ENCODE measurements at regions of chr1 and their contacts with region 1.

Region 1: DNA sequence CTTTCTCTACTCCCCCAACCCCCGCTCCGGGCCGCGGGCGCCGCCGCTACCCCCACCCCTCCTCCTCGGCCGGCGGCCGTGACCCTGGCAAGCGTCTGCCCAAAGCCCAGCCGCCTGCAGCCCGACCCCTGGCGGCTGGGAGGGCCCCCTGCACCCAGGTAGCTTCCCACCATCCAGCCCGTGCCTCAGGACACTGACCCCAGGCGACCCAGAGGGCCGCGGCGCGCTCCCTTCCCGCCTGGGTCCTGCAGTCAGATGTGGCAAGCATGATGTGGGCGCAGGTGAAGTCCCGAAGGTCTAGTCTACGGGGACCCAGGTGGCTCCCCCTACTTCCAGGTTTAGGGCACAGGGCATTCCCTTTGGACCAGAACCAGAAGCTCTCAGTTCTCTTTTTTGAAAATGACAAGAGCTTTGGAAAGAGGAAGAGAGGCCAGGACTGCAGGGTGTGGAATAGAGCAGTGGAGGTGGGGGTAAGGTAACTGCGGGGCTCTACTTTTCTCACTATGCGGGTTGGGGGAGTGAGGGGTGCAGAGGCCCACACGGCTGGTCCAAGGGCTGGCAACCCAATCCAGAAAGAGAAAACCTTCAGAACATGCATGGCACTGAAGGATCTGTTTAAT is at the start of gene DENND4B:
- DNase-seq: peak; percentile 83
- ATAC-seq: peak; percentile 72
- H3K4me3 Mint-ChIP-seq: peak within 1 kb of the TSS; percentile 83
- H3K27ac Mint-ChIP-seq: peak within 1 kb of the TSS; percentile 98
- H3K4me1 Mint-ChIP-seq: peaks cover 27% of the 10 kb centered on the region
- H3K27me3 Mint-ChIP-seq: no peaks in the 10 kb centered on the region
- total RNA-seq, gene DENND4B: 147 to 173 TPM

Region 2: GRCh38 chr1:153796791-153797659 is 149.7 kb before region 1 on chr1:
- CTCF ChIA-PET with region 1: interaction called, 40 read pairs
- DNase-seq: peak; percentile 91
- ATAC-seq: peak; percentile 75
- H3K4me3 Mint-ChIP-seq: no peak overlapping the region
- H3K27ac Mint-ChIP-seq: peak overlapping the region; percentile 13
- H3K4me1 Mint-ChIP-seq: peaks cover 26% of the 10 kb centered on the region
- H3K27me3 Mint-ChIP-seq: no peaks in the 10 kb centered on the region

Region 3: GRCh38 chr1:153827168-153827964 is 119.4 kb before region 1 on chr1:
- CTCF ChIA-PET with region 1: interaction called, 18 read pairs
- DNase-seq: no peak
- ATAC-seq: no peak
- H3K4me3 Mint-ChIP-seq: no peak overlapping the region
- H3K27ac Mint-ChIP-seq: no peak overlapping the region
- H3K4me1 Mint-ChIP-seq: peaks cover 2% of the 10 kb centered on the region
- H3K27me3 Mint-ChIP-seq: no peaks in the 10 kb centered on the region

Region 4: DNA sequence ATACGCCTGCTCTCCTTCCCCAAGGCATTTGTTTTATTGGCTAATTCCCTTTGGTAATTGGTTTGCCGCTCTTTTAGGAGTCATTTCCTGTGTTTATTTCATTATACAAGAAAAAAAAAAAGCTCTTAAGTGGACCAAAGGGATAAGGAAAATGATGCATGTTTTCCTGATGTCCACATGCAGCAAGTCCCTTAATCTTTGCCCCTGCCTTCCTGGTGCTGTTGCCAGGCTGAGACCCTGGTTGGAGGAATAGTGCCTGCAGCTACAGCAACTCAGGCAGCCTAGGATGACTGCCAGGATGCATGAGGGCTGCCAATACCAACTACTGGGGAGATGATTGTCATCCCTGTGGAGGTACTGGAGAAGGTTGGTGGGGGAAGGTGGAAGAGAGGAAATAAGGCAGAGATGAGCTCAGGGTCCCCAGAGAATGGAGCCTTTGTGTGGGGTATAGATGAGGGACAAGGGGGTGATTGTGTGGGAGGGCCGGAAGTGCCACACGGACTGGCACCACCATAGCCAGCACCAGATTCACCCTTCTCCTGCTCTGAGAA is 17.9 kb before region 1 on chr1:
- CTCF ChIA-PET with region 1: interaction called, 61 read pairs
- DNase-seq: no peak
- ATAC-seq: no peak
- H3K4me3 Mint-ChIP-seq: no peak overlapping the region
- H3K27ac Mint-ChIP-seq: peak overlapping the region; percentile 62
- H3K4me1 Mint-ChIP-seq: peaks cover 21% of the 10 kb centered on the region
- H3K27me3 Mint-ChIP-seq: no peaks in the 10 kb centered on the region

Region 5: GRCh38 chr1:153967082-153968000 is 20.6 kb after region 1 on chr1 and contains the start of gene CREB3L4:
- CTCF ChIA-PET with region 1: interaction called, 58 read pairs
- DNase-seq: peak; percentile 92
- ATAC-seq: peak; percentile 86
- H3K4me3 Mint-ChIP-seq: peak within 1 kb of the TSS; percentile 97
- H3K27ac Mint-ChIP-seq: peak within 1 kb of the TSS; percentile 96
- H3K4me1 Mint-ChIP-seq: peaks cover 50% of the 10 kb centered on the region
- H3K27me3 Mint-ChIP-seq: no peaks in the 10 kb centered on the region
- total RNA-seq, gene CREB3L4: 6.3 to 8.5 TPM

Region 6: DNA sequence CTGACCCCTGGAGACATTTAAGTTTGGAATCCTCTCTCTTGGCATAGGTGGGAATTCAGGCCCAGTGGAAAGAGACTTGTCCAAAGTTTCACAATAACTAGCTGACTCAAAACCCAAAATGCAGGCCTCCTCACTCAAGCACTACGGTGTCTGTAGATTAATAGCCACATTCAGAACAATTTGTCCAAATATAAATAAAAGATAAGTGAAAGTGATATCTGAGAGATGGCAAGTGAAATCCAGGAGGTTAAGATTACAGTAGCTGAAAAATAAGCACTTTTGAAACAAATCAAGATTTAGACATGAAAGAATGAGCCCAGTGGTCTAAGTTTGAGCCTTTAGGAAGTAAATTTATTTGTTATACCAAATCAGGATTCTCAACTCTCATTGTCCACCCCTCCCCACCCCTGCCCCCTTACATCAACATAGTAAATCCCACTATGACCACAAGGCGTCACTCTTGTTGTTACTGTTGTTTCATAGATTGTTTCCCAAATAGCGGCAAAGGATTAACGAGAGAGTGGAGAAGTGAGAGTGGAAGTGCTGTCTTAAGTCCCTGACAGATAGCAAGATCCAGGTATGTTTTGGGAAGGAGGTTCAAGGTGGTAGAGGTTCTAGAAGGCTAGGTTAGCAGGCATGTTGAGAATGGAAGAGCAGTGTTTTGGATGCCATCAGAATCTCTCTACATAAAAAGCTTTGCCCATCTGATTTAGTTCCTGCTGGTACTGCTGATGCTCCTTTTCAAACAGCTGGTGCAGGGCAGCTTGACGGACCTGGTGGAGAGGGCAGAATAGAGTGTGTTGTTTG is 252.2 kb after region 1 on chr1:
- CTCF ChIA-PET with region 1: no interaction called
- DNase-seq: peak; percentile 58
- ATAC-seq: peak; percentile 77
- H3K4me3 Mint-ChIP-seq: no peak overlapping the region
- H3K27ac Mint-ChIP-seq: no peak overlapping the region
- H3K4me1 Mint-ChIP-seq: peaks cover 3% of the 10 kb centered on the region
- H3K27me3 Mint-ChIP-seq: peaks cover 10% of the 10 kb centered on the region

Region 7: GRCh38 chr1:154501423-154502065 is 554.8 kb after region 1 on chr1:
- CTCF ChIA-PET with region 1: no interaction called
- DNase-seq: no peak
- ATAC-seq: no peak
- H3K4me3 Mint-ChIP-seq: no peak overlapping the region
- H3K27ac Mint-ChIP-seq: no peak overlapping the region
- H3K4me1 Mint-ChIP-seq: peaks cover 8% of the 10 kb centered on the region
- H3K27me3 Mint-ChIP-seq: peaks cover 72% of the 10 kb centered on the region